Caki2 (cell line): ENCODE measurements at regions of chr9 and their contacts with region 1.

Region 1: GRCh38 chr9:87336914-87337333 is 160.7 kb upstream of the DAPK1 start:
- DNase-seq: no peak

Region 2: DNA sequence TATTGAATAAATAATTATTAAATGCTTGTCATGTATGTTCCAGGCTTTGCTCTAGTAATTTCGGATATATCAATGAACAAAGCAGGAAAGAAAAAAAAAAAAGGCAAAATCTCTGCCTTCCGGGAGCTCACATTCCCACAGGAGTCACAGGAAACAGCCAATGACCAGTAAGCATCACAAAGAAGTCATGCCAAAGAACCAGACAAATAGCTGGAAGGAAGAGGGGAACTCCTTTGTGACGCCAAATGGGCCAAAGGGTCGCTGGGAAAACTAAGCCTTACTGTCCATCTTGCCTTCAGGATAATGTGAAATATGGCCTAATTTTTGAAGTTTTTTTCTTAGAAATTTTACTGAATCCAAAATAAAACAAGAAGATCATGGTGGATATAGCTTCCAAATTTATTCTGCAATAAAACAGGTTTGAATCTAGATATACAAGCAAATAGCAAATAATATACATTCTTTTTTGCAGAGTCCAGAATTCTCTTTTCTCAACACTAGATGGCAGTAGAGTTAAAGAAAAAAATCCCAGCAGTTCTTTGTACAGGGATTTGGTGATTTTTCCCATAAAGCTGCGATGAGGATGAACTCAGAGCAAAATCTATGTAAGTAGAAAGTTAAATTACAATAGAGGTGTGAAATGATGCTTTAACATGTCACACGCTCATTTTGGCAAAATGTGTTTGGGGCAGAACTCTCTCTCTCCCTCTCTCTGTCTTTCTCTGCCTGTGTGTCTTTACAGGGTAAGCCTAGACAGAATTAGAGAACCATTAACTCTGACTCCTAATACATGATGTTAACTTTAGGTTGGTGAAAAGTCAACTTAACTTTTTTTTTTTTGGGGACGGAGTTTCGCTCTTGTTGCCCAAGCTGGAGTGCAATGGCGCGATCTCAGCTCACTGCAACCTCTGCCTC is 922.7 kb before region 1 on chr9:
- in situ Hi-C with region 1: loop called (anchors 25 kb)
- DNase-seq: peak; percentile 50

Region 3: GRCh38 chr9:86893811-86894490 is 443.0 kb before region 1 on chr9:
- in situ Hi-C with region 1: no loop called
- DNase-seq: no peak